A673 (cell line): ENCODE measurements at regions of chr1 and their contacts with region 1.

Region 1: GRCh38 chr1:16409536-16410152 is 27.6 kb downstream of the SPATA21 start:
- DNase-seq: no peak
- H3K4me3 ChIP-seq: no peak overlapping the region
- H3K27ac ChIP-seq: no peak overlapping the region
- H3K4me1 ChIP-seq: no peaks in the 10 kb centered on the region
- H3K27me3 ChIP-seq: no peaks in the 10 kb centered on the region
- CTCF ChIP-seq: no peak

Region 2: DNA sequence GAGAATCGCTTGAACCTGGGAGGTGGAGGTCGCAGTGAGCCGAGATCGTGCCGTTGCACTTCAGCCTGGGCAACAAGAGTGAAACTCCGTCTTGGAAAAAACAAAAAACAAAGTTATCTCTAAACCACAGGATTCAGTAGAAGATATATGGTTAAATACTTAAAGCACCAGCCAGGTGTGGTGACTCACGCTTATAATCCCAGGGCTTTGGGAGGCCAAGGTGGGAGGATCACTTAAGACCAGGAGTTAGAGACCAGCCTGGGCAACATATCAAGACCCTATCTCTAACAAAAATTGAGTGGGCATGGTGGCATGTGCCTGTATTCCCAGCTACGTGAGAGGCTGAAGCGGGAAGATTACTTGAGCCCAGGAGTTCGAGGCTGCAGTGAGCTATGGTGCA is 36.5 kb after region 1 on chr1:
- CTCF ChIA-PET with region 1: no interaction called
- POLR2A ChIA-PET with region 1: interaction called, 11 read pairs
- intact Hi-C with region 1: no loop called
- DNase-seq: no peak
- H3K4me3 ChIP-seq: no peak overlapping the region
- H3K27ac ChIP-seq: no peak overlapping the region
- H3K4me1 ChIP-seq: peaks cover 5% of the 10 kb centered on the region
- H3K27me3 ChIP-seq: no peaks in the 10 kb centered on the region
- CTCF ChIP-seq: no peak